Right lobe of liver (tissue), 6 donors: ENCODE measurements at regions of chr14 and their contacts with region 1.

Region 1: DNA sequence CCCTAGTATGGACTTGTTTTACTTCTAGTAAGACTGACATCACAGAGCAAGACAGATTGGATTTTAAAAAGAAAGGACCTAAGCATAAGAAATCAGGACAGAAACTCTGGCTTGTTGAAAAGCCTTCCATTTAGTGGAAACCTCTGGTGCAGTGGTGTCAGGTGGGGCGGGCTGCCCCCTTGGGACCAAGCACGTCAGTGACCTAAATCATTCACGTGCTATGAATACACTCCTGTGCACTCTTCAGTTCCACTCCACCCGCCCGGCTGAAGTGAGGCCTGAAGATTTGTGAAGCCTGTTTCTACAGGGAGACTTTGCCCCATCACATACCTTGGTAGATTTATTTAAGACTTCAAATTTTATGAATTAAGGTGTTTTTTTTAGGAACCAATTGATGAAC is 58.2 kb upstream of the STRN3 start:
- DNase-seq: no peak
- ATAC-seq: no peak
- H3K4me3 ChIP-seq: no peak overlapping the region
- H3K27ac ChIP-seq: no peak overlapping the region
- H3K4me1 ChIP-seq: no peaks in the 10 kb centered on the region
- H3K27me3 ChIP-seq: no peaks in the 10 kb centered on the region
- CTCF ChIP-seq: no peak
- POLR2A ChIP-seq: no peak

Region 2: GRCh38 chr14:30988509-30988908 is 95.9 kb before region 1 on chr14:
- intact Hi-C with region 1: loop called (anchors 10 kb)
- DNase-seq: no peak
- ATAC-seq: peak in 1 of 4 donors; percentile 43
- H3K4me3 ChIP-seq: no peak overlapping the region
- H3K27ac ChIP-seq: no peak overlapping the region
- H3K4me1 ChIP-seq: peaks cover 0 to 28% (median 4%) of the 10 kb centered on the region in 4 donors
- H3K27me3 ChIP-seq: no peaks in the 10 kb centered on the region
- CTCF ChIP-seq: no peak
- POLR2A ChIP-seq: no peak